Activated CD4-positive, alpha-beta memory T cell treated with anti-CD3 and anti-CD28 coated beads, Interleukin-2, amount 10 ng/mL, durations not matched to agents 7 days and 5 days (primary cell): ENCODE measurements at regions of chr19 and their contacts with region 1.

Region 1: DNA sequence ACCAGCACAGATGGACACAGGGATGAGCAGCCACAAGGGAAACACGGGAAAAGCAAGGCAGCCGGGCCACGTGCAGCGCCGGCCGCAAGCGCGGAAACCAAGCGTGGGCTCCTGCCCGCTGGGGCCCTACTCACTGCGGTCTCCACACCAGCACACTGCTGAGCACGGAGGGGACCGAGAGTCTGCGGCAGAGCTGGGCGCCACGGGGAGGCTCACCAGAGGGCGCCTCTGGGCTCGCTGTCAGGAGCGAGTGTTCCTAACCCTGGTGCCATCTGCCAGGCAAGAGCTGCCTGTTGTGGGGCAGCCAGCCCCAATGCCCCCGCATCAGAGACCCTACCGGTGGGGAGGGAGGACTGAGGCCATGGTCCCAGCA is 26.5 kb downstream of the MPND start:
- DNase-seq: peak; percentile 82
- H3K4me3 Mint-ChIP-seq: peak overlapping the region; percentile 73
- H3K27ac Mint-ChIP-seq: peak overlapping the region; percentile 97
- H3K4me1 Mint-ChIP-seq: peaks cover 61% of the 10 kb centered on the region
- H3K27me3 Mint-ChIP-seq: no peaks in the 10 kb centered on the region

Region 2: GRCh38 chr19:4393947-4394590 is 24.2 kb after region 1 on chr19:
- CTCF ChIA-PET with region 1: interaction called, 12 read pairs
- POLR2A ChIA-PET with region 1: interaction called, 20 read pairs
- DNase-seq: no peak
- H3K4me3 Mint-ChIP-seq: no peak overlapping the region
- H3K27ac Mint-ChIP-seq: no peak overlapping the region
- H3K4me1 Mint-ChIP-seq: peaks cover 68% of the 10 kb centered on the region
- H3K27me3 Mint-ChIP-seq: no peaks in the 10 kb centered on the region

Region 3: DNA sequence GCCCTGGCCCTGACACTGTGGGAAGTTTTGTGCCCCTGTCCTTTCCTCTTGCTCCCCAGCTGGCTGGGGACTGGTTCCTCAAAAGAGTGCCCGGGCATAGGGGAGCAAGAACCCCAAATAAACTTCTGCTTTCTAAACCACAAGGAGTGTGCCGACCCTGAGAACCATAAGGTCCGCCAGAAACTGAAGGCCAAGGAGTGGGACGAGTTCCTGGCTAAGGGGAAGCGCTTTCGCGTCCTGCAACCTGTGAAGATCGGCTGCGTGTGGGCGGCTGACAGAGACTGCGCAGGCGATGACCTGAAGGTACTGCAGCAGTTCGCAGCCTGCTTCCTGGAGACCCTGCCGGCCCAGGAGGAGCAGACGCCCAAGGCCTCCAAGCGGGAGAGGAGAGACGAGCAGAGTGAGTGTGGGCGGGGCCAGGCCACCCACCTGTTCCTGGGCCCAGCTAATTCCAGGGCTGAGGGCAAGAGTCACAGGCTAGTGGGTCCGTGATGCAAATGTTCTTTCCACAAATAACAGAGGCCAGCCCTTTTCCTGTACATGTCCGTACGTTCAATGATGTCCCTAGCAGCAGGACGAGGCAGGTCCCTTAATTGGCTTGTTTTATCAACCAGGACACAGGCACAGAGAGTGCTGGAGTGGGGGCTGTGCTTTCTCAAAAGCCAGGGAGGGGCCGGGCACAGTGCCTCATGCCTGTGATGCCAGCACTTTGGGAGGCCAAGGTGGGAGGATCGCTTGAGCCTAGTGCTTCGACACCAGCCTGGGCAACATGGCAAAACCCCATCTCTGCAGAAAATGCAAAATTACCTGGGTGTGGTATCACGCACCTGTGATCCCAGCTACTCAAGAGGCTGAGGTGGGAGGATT is 62.2 kb after region 1 on chr19:
- CTCF ChIA-PET with region 1: no interaction called
- POLR2A ChIA-PET with region 1: no interaction called
- DNase-seq: no peak
- H3K4me3 Mint-ChIP-seq: no peak overlapping the region
- H3K27ac Mint-ChIP-seq: no peak overlapping the region
- H3K4me1 Mint-ChIP-seq: no peaks in the 10 kb centered on the region
- H3K27me3 Mint-ChIP-seq: no peaks in the 10 kb centered on the region